Endothelial cell of umbilical vein (primary cell): ENCODE measurements at regions of chr16 and their contacts with region 1.

Region 1: DNA sequence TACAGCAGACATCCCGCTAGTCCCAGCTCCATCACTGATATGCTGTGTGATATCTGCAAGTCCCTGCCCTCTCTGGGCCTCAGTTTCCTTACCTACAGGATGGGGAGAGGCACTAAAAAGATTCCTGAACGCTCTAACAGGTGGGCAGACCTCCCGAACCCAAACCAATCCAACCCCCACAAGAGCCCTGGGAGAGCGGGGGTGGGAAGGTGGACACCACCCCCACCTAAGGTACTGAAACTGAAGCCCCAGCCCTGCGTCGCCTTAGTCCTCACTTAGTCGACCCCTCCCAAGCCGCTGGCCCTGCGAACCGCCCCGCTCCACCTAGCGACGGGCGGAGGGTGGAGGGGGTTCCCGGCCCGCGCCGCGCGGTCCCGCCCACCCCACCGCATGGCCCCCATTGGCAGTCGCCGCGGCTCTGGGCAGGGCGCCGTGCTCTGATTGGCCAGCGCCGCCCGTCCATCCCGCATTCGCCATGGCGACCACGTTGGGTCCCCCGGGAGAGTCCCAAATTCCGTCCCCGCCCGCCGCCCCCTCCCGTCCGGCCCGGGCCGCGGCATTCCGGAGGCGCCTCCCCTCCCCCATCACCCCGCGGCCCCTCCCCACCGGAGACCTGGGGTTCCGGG is 578 bp downstream of the CCDC102A start:
- DNase-seq: peak; percentile 87
- H3K4me3 ChIP-seq: peak overlapping the region; percentile 80 to 82 (median 80)
- H3K27ac ChIP-seq: peak overlapping the region; percentile 18
- H3K4me1 ChIP-seq: peaks cover 25% of the 10 kb centered on the region
- H3K27me3 ChIP-seq: peaks cover 3 to 24% of the 10 kb centered on the region in 2 experiments
- CTCF ChIP-seq: peak in 1 of 2 donors; percentile 16
- POLR2A ChIP-seq: no peak

Region 2: GRCh38 chr16:57485916-57486857 is 49.6 kb before region 1 on chr16 and contains the start of gene DOK4:
- CTCF ChIA-PET with region 1: interaction called, 3 read pairs
- POLR2A ChIA-PET with region 1: no interaction called
- dilution Hi-C with region 1: no loop called
- intact Hi-C with region 1: loop called (anchors 2 kb)
- DNase-seq: peak; percentile 36
- H3K4me3 ChIP-seq: peak within 1 kb of the TSS; percentile 49 to 72 (median 51)
- H3K27ac ChIP-seq: no peak within 1 kb of the TSS
- H3K4me1 ChIP-seq: peaks cover 6% of the 10 kb centered on the region
- H3K27me3 ChIP-seq: peaks cover 0 to 4% of the 10 kb centered on the region in 2 experiments
- CTCF ChIP-seq: no peak
- POLR2A ChIP-seq: no peak
- total RNA-seq, gene DOK4: 22.3 and 24.4 TPM in 2 replicates

Region 3: GRCh38 chr16:57503366-57503765 is 32.4 kb before region 1 on chr16:
- CTCF ChIA-PET with region 1: no interaction called
- POLR2A ChIA-PET with region 1: no interaction called
- dilution Hi-C with region 1: no loop called
- intact Hi-C with region 1: no loop called
- DNase-seq: no peak
- H3K4me3 ChIP-seq: no peak overlapping the region
- H3K27ac ChIP-seq: no peak overlapping the region
- H3K4me1 ChIP-seq: no peaks in the 10 kb centered on the region
- H3K27me3 ChIP-seq: peaks cover 0 to 8% of the 10 kb centered on the region in 2 experiments
- CTCF ChIP-seq: no peak
- POLR2A ChIP-seq: no peak

Region 4: DNA sequence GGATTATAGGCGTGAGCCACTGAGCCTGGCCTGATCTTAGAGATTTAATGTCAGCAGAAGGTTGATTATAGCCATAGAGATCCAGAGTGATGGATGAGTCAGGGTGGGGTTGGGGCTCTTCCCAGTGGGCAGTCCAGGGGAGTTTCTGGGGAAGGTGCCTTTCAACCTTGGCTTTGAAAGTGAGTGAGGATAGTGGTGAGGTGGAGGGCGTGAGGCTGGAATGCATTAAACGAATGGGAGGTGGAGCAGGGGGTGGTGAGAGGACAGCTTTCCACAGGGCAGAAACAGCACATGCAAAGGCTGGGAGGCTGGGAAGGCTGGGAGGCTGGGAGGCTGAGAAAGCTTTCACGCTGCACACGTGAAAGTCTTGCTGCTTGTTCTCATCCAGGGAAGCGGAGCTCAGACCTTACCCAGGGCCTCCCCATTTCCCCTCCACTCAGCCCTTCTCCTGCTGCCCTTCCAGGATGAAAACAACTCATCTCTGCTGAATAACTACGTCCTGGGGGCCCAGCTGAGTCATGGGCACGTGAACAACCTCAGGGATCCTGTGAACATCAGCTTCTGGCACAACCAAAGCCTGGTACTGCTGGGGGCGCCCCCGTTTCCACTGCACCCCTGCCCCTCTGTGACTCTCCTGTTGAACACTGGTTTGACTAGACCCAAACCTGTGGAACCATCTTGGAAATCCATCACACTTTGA is 28.9 kb after region 1 on chr16:
- CTCF ChIA-PET with region 1: no interaction called
- POLR2A ChIA-PET with region 1: no interaction called
- dilution Hi-C with region 1: no loop called
- intact Hi-C with region 1: no loop called
- DNase-seq: no peak
- H3K4me3 ChIP-seq: no peak overlapping the region
- H3K27ac ChIP-seq: no peak overlapping the region
- H3K4me1 ChIP-seq: no peaks in the 10 kb centered on the region
- H3K27me3 ChIP-seq: peaks cover 6 to 7% of the 10 kb centered on the region in 2 experiments
- CTCF ChIP-seq: no peak
- POLR2A ChIP-seq: no peak